ENCODE measurements at regions of chrX and their contacts with region 1.

Region 1: DNA sequence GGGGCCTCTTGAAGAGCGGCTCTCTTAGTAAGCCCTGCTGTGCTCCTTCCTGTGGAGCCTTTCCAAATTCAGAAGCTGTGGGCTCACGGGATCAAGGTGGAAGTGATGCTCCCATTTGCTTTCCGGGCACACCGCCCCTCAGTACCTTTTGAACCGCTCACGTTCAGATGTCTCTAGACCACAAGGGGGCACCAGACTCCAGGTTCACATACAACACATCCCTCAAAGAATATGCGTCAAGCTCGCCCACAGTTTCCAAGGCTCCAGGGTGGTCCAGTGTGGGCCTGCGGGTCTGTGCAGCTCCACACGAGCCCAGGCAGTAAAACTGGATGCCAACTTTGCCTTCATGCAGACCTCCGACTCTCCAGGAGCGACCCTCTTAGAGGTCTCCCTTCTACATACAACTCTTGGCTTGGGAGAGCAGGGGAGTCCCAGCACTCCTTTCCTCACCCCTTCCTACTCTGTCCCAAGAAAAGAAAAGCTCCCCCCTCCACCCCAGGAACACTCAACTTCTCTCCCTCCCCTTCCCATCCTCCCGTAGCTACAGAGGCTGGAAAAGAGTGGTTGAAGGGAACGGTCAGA is 11.0 kb downstream of the SUPT20HL1 start:
- DNase-seq: peak; percentile 59
- H3K4me3 Mint-ChIP-seq: peak overlapping the region; percentile 41
- H3K27ac Mint-ChIP-seq: no peak overlapping the region
- H3K4me1 Mint-ChIP-seq: peaks cover 16% of the 10 kb centered on the region
- H3K27me3 Mint-ChIP-seq: no peaks in the 10 kb centered on the region

Region 2: GRCh38 chrX:24259544-24260240 is 111.8 kb before region 1 on chrX:
- CTCF ChIA-PET with region 1: interaction called, 17 read pairs
- POLR2A ChIA-PET with region 1: no interaction called
- DNase-seq: peak; percentile 17
- H3K4me3 Mint-ChIP-seq: no peak overlapping the region
- H3K27ac Mint-ChIP-seq: no peak overlapping the region
- H3K4me1 Mint-ChIP-seq: peaks cover 11% of the 10 kb centered on the region
- H3K27me3 Mint-ChIP-seq: peaks cover 4% of the 10 kb centered on the region

Region 3: DNA sequence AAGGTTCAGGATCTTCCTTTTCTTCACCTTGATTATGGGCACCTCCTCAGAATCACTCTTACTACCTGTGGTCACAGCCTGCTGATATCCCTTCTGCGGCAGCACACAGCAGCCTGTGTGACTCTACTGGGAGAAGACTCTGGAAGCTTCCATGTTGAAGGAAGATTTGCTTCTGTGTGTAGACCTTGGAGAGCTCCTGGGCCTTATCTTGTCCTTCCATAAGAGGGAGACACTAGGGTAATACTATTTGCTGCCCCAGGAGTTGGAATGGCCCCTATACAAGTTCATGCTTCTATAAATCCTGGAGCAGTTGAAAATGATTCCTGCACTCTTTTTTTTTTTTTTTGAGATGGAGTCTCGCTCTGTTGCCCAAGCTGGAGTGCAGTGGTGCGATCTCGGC is 21.3 kb before region 1 on chrX:
- CTCF ChIA-PET with region 1: no interaction called
- POLR2A ChIA-PET with region 1: no interaction called
- DNase-seq: no peak
- H3K4me3 Mint-ChIP-seq: no peak overlapping the region
- H3K27ac Mint-ChIP-seq: no peak overlapping the region
- H3K4me1 Mint-ChIP-seq: no peaks in the 10 kb centered on the region
- H3K27me3 Mint-ChIP-seq: no peaks in the 10 kb centered on the region

Region 4: DNA sequence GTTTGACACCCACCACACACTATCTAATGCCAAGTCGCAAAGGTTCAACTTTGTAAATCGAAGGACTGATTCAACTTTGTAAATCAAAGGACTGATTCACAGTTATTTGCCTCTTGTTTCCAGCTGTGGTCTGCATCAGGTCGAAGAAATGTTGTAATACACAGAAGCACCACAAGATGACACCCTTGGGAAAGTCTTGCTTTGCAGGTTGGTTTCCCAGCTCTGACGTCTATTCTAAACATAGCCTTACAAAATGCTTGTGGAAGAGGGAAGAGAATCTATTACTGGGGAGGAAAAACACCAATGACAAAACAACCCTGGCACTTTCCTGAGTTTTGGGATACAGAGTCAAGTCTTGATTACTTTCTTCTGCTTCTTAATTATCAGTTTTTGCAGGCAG is 24.3 kb after region 1 on chrX:
- CTCF ChIA-PET with region 1: interaction called, 10 read pairs
- POLR2A ChIA-PET with region 1: no interaction called
- DNase-seq: peak; percentile 26
- H3K4me3 Mint-ChIP-seq: no peak overlapping the region
- H3K27ac Mint-ChIP-seq: no peak overlapping the region
- H3K4me1 Mint-ChIP-seq: no peaks in the 10 kb centered on the region
- H3K27me3 Mint-ChIP-seq: peaks cover 10% of the 10 kb centered on the region

Measured in activated CD4-positive, alpha-beta memory T cell treated with anti-CD3 and anti-CD28 coated beads, Interleukin-2, amount 10 ng/mL, durations not matched to agents 7 days and 5 days (primary cell).